CD8-positive, alpha-beta T cell (primary cell): ENCODE measurements at regions of chr19 and their contacts with region 1.

Region 1: DNA sequence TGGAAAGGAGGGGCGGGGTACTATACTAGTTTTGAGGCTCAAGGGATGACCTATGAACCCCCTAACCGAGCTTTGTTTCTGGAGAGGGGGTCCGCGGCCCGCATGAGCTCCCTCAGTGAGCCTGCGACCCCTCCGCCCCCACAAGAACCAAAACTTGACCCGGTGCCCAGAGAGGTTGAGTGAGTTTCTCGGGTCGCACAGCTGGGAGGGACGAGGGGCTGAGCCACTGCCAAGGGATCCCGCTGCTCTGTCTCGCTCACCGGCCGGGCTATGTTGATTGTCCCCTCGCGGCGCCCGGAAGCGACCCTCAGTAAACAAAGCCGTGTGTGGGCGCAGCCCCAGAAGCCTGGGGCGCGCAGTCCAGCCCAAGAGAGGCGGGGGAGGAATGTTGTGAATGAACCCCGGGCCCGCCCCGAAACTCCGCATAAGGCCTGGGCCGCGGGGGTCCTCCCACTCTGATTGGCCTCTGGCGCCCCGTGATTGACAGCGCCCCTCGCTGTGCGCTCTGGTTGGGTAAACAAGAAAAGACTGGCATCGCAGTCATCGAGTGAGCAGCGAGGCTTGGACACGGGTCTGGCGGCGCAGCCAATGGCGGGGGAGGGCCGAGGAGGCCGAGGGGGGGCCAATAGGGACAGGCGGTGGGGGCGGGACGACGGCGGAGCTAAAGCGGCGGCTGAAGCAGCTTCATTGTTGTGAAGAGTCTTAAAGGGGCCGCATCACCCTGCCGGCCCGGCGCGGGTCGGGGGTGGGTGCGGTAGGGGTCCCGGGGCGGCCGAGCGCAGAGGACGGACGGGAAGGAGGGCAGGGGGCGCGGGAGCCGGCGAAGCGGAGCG is at the start of gene ZSWIM4:
- DNase-seq: peak; percentile 83 to 96 (median 91)
- ATAC-seq: peak; percentile 85
- H3K4me3 ChIP-seq: peak within 1 kb of the TSS; percentile 73 to 80
- H3K4me3 Mint-ChIP-seq: peak within 1 kb of the TSS; percentile 92
- H3K27ac ChIP-seq: peak within 1 kb of the TSS; percentile 51 to 77
- H3K27ac Mint-ChIP-seq: peak within 1 kb of the TSS; percentile 89
- H3K4me1 ChIP-seq: peaks cover 27% of the 10 kb centered on the region
- H3K4me1 Mint-ChIP-seq: peaks cover 38% of the 10 kb centered on the region
- H3K27me3 ChIP-seq: no peaks in the 10 kb centered on the region
- H3K27me3 Mint-ChIP-seq: no peaks in the 10 kb centered on the region
- CTCF ChIP-seq: no peak
- total RNA-seq, gene ZSWIM4: 4.1 to 5.0 TPM

Region 2: GRCh38 chr19:13833330-13834243 is 38.6 kb after region 1 on chr19:
- CTCF ChIA-PET with region 1: interaction called, 15 read pairs
- POLR2A ChIA-PET with region 1: interaction called, 8 read pairs
- intact Hi-C with region 1: loop called (anchors 2 kb)
- DNase-seq: peak; percentile 83 to 97 (median 93)
- ATAC-seq: peak; percentile 84
- H3K4me3 ChIP-seq: peak overlapping the region; percentile 64 to 82
- H3K4me3 Mint-ChIP-seq: peak overlapping the region; percentile 86
- H3K27ac ChIP-seq: peak overlapping the region; percentile 53 to 80
- H3K27ac Mint-ChIP-seq: peak overlapping the region; percentile 86
- H3K4me1 ChIP-seq: peaks cover 44% of the 10 kb centered on the region
- H3K4me1 Mint-ChIP-seq: peaks cover 38% of the 10 kb centered on the region
- H3K27me3 ChIP-seq: no peaks in the 10 kb centered on the region
- H3K27me3 Mint-ChIP-seq: no peaks in the 10 kb centered on the region
- CTCF ChIP-seq: peak; percentile 72